Mammary epithelial cell (primary cell): ENCODE measurements at regions of chr4 and their contacts with region 1.

Region 1: GRCh38 chr4:60611762-60612496 is 588.2 kb upstream of the ADGRL3 start:
- DNase-seq: peak; percentile 95
- H3K4me3 ChIP-seq: no peak overlapping the region
- H3K27ac ChIP-seq: peak overlapping the region; percentile 97
- H3K4me1 ChIP-seq: peaks cover 21% of the 10 kb centered on the region
- H3K27me3 ChIP-seq: no peaks in the 10 kb centered on the region
- CTCF ChIP-seq: no peak

Region 2: DNA sequence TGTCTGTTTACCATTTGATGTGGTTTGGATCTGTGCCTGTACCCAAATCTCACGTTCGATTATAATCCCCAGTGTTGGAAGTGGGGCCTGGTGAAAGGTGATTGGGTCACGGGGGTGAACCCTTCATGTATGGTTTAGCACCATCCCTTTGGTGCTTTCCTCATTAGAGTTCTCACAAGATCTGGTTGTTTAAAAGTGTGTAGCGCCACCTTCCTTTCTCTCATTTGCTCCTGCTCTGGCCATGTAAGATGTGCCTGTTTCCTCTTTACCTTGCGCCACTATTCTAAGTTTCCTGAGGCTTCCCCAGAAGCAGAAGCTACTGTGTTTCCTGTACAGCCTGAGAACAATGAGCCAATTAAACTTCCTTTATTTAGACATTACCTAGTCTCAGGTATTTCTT is 22.5 kb before region 1 on chr4:
- CTCF ChIA-PET with region 1: no interaction called
- dilution Hi-C with region 1: no loop called
- in situ Hi-C with region 1: no loop called
- intact Hi-C with region 1: no loop called
- DNase-seq: no peak
- H3K4me3 ChIP-seq: no peak overlapping the region
- H3K27ac ChIP-seq: no peak overlapping the region
- H3K4me1 ChIP-seq: peaks cover 10% of the 10 kb centered on the region
- H3K27me3 ChIP-seq: no peaks in the 10 kb centered on the region
- CTCF ChIP-seq: no peak

Region 3: GRCh38 chr4:60656171-60656570 is 44.2 kb after region 1 on chr4:
- CTCF ChIA-PET with region 1: no interaction called
- dilution Hi-C with region 1: no loop called
- in situ Hi-C with region 1: no loop called
- intact Hi-C with region 1: loop called (anchors 5 kb)
- DNase-seq: no peak
- H3K4me3 ChIP-seq: no peak overlapping the region
- H3K27ac ChIP-seq: no peak overlapping the region
- H3K4me1 ChIP-seq: peaks cover 6% of the 10 kb centered on the region
- H3K27me3 ChIP-seq: no peaks in the 10 kb centered on the region
- CTCF ChIP-seq: peak in 1 of 2 donors; percentile 12